H1 (cell line): ENCODE measurements at regions of chr1 and their contacts with region 1.

Region 1: DNA sequence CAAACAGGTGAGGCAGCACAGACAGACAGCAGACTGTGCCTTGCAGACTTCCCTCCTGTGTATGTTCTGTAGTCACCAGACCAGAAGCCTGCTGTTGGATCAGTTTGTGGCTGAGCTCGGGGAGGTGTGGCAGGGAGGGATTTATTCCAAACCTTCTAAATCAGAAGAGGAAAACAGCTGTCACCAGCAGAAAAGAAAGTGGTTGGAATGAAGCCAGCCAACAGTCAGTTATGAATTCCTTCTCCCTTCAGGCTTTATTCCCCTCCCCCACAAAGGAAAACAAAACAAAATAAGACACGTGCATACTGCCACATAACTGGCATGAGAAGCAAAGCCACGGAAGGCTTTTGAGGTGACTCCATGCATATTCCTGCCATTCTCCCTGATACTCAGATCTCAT is 19.0 kb upstream of the PIGV start:
- DNase-seq: no peak
- H3K4me3 ChIP-seq: no peak overlapping the region
- H3K27ac ChIP-seq: no peak overlapping the region
- H3K4me1 ChIP-seq: no peaks in the 10 kb centered on the region
- H3K27me3 ChIP-seq: no peaks in the 10 kb centered on the region
- CTCF ChIP-seq: no peak
- EP300 ChIP-seq: no peak
- POLR2A ChIP-seq: no peak
- RAD21 ChIP-seq: no peak

Region 2: DNA sequence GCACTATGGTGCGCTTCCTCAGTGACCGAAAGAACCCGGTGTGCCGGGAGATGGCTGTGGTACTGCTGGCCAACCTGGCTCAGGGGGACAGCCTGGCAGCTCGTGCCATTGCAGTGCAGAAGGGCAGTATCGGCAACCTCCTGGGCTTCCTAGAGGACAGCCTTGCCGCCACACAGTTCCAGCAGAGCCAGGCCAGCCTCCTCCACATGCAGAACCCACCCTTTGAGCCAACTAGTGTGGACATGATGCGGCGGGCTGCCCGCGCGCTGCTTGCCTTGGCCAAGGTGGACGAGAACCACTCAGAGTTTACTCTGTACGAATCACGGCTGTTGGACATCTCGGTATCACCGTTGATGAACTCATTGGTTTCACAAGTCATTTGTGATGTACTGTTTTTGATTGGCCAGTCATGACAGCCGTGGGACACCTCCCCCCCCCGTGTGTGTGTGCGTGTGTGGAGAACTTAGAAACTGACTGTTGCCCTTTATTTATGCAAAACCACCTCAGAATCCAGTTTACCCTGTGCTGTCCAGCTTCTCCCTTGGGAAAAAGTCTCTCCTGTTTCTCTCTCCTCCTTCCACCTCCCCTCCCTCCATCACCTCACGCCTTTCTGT is 11.7 kb after region 1 on chr1:
- CTCF ChIA-PET with region 1: interaction called, 10 read pairs
- POLR2A ChIA-PET with region 1: interaction called, 9 read pairs
- DNase-seq: no peak
- H3K4me3 ChIP-seq: no peak overlapping the region
- H3K27ac ChIP-seq: no peak overlapping the region
- H3K4me1 ChIP-seq: peaks cover 0 to 4% (median 2%) of the 10 kb centered on the region in 4 experiments; a peak in 2 of 7 replicates
- H3K27me3 ChIP-seq: no peaks in the 10 kb centered on the region
- CTCF ChIP-seq: no peak
- EP300 ChIP-seq: no peak
- POLR2A ChIP-seq: no peak
- RAD21 ChIP-seq: no peak

Region 3: DNA sequence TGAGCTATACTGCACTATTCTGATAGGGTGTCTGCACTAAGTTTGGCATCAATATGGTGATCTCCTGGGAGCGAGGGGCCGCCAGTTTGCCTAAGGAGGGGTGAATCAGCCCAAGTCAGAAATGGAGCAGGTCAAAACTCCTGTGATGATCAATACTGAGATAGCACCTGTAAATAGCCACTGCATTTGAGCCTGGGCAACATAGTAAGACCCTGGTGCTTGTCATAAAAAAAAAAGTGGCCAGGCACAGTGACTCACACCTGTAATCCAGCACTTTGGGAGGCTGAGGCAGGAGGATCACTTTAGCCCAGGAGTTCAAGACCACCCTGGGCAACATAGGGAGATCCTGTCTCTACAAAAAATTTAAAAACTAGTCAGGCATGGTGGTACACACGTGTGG is 46.1 kb after region 1 on chr1:
- CTCF ChIA-PET with region 1: no interaction called
- POLR2A ChIA-PET with region 1: no interaction called
- DNase-seq: no peak
- H3K4me3 ChIP-seq: no peak overlapping the region
- H3K27ac ChIP-seq: no peak overlapping the region
- H3K4me1 ChIP-seq: no peaks in the 10 kb centered on the region
- H3K27me3 ChIP-seq: no peaks in the 10 kb centered on the region
- CTCF ChIP-seq: no peak
- EP300 ChIP-seq: no peak
- POLR2A ChIP-seq: no peak
- RAD21 ChIP-seq: no peak

Region 4: GRCh38 chr1:26826261-26827105 is 57.7 kb after region 1 on chr1 and contains the start of gene ZDHHC18:
- CTCF ChIA-PET with region 1: no interaction called
- POLR2A ChIA-PET with region 1: no interaction called
- DNase-seq: peak in 1 of 2 experiments; percentile 86
- H3K4me3 ChIP-seq: peak within 1 kb of the TSS; percentile 53 to 76 (median 56)
- H3K27ac ChIP-seq: no peak within 1 kb of the TSS
- H3K4me1 ChIP-seq: peaks cover 6 to 9% (median 7%) of the 10 kb centered on the region in 4 experiments; a peak in 6 of 7 replicates
- H3K27me3 ChIP-seq: no peaks in the 10 kb centered on the region
- CTCF ChIP-seq: peak; percentile 55 to 68 (median 65)
- EP300 ChIP-seq: no peak
- POLR2A ChIP-seq: peak in 1 of 2 experiments; percentile 34; a peak in 1 of 3 replicates
- RAD21 ChIP-seq: peak in 1 of 2 experiments; percentile 0; a peak in 2 of 4 replicates
- total RNA-seq, gene ZDHHC18: 29.2 and 29.7 TPM in 2 replicates